MCF 10A (cell line): ENCODE measurements at regions of chr2 and their contacts with region 1.

Region 1: DNA sequence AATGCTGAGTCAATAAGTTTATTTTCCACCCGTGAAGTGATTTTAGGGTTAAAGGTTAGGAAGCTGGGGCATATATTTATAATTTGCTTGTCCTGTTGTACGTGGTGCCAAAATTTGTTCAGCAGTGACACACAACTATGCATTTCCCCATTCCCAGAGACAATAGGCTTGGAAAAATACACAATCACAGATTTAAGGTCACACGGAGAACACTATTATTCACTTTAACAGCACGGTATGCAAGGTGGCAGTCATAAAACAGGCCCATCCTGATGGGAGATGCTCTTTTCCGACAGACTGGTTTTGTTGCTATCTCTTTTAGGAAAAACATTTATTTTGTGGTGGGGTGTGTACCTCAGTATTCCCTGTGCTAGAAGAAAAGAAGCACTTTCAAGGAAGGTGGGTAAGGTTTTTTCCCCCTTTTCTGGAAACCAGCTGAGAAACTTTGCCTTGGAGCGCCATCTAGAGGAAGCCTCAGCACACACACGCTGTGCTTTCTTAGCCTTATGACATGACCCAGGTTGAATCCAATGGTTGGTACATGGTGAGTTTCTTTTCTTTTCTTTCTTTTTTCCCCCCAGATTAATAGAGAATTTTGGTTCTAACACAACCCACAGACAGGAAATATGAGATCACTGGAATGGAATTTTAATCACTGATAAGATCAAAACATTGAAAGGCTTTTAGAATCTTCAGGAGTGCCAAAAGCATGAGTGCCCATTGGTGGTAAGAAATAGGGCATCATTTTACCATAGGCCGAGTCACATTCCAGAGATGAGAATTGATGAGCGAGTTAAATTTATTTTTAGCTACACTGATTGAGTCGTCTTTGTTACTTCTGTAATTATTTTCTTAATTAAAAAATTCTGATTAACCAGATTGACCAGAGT is 332.1 kb downstream of the AGPS start:
- DNase-seq: peak; percentile 58
- H3K4me3 Mint-ChIP-seq: no peak overlapping the region
- H3K27ac Mint-ChIP-seq: no peak overlapping the region
- H3K4me1 Mint-ChIP-seq: no peaks in the 10 kb centered on the region
- H3K27me3 Mint-ChIP-seq: peaks cover 53% of the 10 kb centered on the region
- CTCF ChIP-seq: peak; percentile 86

Region 2: GRCh38 chr2:177419274-177419673 is 305.4 kb before region 1 on chr2:
- CTCF ChIA-PET with region 1: interaction called, 7 read pairs
- POLR2A ChIA-PET with region 1: no interaction called
- intact Hi-C with region 1: loop called (anchors 5 kb)
- DNase-seq: peak; percentile 77
- H3K4me3 Mint-ChIP-seq: peak overlapping the region; percentile 44
- H3K27ac Mint-ChIP-seq: peak overlapping the region; percentile 49
- H3K4me1 Mint-ChIP-seq: peaks cover 7% of the 10 kb centered on the region
- H3K27me3 Mint-ChIP-seq: no peaks in the 10 kb centered on the region
- CTCF ChIP-seq: no peak

Region 3: GRCh38 chr2:177489719-177490301 is 234.8 kb before region 1 on chr2:
- CTCF ChIA-PET with region 1: interaction called, 11 read pairs
- POLR2A ChIA-PET with region 1: interaction called, 3 read pairs
- intact Hi-C with region 1: loop called (anchors 1 kb)
- DNase-seq: peak; percentile 52
- H3K4me3 Mint-ChIP-seq: no peak overlapping the region
- H3K27ac Mint-ChIP-seq: no peak overlapping the region
- H3K4me1 Mint-ChIP-seq: no peaks in the 10 kb centered on the region
- H3K27me3 Mint-ChIP-seq: no peaks in the 10 kb centered on the region
- CTCF ChIP-seq: peak; percentile 55

Region 4: GRCh38 chr2:177604271-177605065 is 120.2 kb before region 1 on chr2:
- CTCF ChIA-PET with region 1: interaction called, 10 read pairs
- POLR2A ChIA-PET with region 1: no interaction called
- intact Hi-C with region 1: no loop called
- DNase-seq: peak; percentile 58
- H3K4me3 Mint-ChIP-seq: no peak overlapping the region
- H3K27ac Mint-ChIP-seq: no peak overlapping the region
- H3K4me1 Mint-ChIP-seq: peaks cover 5% of the 10 kb centered on the region
- H3K27me3 Mint-ChIP-seq: peaks cover 5% of the 10 kb centered on the region
- CTCF ChIP-seq: peak; percentile 42

Region 5: GRCh38 chr2:177735318-177735803 is 10.7 kb after region 1 on chr2:
- CTCF ChIA-PET with region 1: interaction called, 17 read pairs
- POLR2A ChIA-PET with region 1: interaction called, 5 read pairs
- intact Hi-C with region 1: no loop called
- DNase-seq: no peak
- H3K4me3 Mint-ChIP-seq: no peak overlapping the region
- H3K27ac Mint-ChIP-seq: no peak overlapping the region
- H3K4me1 Mint-ChIP-seq: no peaks in the 10 kb centered on the region
- H3K27me3 Mint-ChIP-seq: peaks cover 16% of the 10 kb centered on the region
- CTCF ChIP-seq: no peak

Region 6: DNA sequence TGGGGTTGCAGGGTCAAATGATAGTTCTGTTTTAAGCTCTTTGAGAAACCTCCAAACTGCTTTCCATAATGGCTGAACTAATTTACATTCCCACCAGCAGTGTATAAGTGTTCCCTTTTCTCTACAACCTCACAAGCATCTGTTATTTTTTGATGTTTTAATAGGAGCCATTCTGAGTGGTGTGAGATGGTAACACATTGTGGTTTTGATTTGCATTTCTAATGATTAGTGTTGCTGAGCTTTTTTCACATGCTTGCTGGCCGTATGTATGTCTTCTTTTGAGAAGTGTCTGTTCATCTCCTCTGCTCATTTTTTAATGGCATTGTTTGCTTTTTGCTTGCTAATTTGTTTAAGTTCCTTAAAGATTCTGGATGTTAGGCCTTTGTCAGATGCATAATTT is 240.2 kb after region 1 on chr2:
- CTCF ChIA-PET with region 1: no interaction called
- POLR2A ChIA-PET with region 1: no interaction called
- intact Hi-C with region 1: no loop called
- DNase-seq: no peak
- H3K4me3 Mint-ChIP-seq: no peak overlapping the region
- H3K27ac Mint-ChIP-seq: no peak overlapping the region
- H3K4me1 Mint-ChIP-seq: no peaks in the 10 kb centered on the region
- H3K27me3 Mint-ChIP-seq: no peaks in the 10 kb centered on the region
- CTCF ChIP-seq: no peak